IMR-90 (cell line): ENCODE measurements at regions of chr4 and their contacts with region 1.

Region 1: GRCh38 chr4:88378691-88379559 is at the start of gene HERC6:
- DNase-seq: peak; percentile 78
- ATAC-seq: peak; percentile 99
- H3K4me3 ChIP-seq: peak within 1 kb of the TSS; percentile 66
- H3K27ac ChIP-seq: peak within 1 kb of the TSS; percentile 27
- H3K4me1 ChIP-seq: no peaks in the 10 kb centered on the region
- H3K27me3 ChIP-seq: peaks cover 5% of the 10 kb centered on the region
- CTCF ChIP-seq: peak; percentile 54
- POLR2A ChIP-seq: no peak
- RAD21 ChIP-seq: no peak
- total RNA-seq, gene HERC6: 0.83 and 1.6 TPM in 2 replicates

Region 2: GRCh38 chr4:88033309-88033708 is 345.6 kb before region 1 on chr4:
- CTCF ChIA-PET with region 1: no interaction called
- POLR2A ChIA-PET with region 1: no interaction called
- dilution Hi-C with region 1: no loop called
- in situ Hi-C with region 1: no loop called
- intact Hi-C with region 1: loop called (anchors 10 kb)
- DNase-seq: peak; percentile 72
- ATAC-seq: peak; percentile 78
- H3K4me3 ChIP-seq: no peak overlapping the region
- H3K27ac ChIP-seq: no peak overlapping the region
- H3K4me1 ChIP-seq: peaks cover 8% of the 10 kb centered on the region
- H3K27me3 ChIP-seq: no peaks in the 10 kb centered on the region
- CTCF ChIP-seq: peak; percentile 74
- POLR2A ChIP-seq: no peak
- RAD21 ChIP-seq: peak; percentile 80

Region 3: DNA sequence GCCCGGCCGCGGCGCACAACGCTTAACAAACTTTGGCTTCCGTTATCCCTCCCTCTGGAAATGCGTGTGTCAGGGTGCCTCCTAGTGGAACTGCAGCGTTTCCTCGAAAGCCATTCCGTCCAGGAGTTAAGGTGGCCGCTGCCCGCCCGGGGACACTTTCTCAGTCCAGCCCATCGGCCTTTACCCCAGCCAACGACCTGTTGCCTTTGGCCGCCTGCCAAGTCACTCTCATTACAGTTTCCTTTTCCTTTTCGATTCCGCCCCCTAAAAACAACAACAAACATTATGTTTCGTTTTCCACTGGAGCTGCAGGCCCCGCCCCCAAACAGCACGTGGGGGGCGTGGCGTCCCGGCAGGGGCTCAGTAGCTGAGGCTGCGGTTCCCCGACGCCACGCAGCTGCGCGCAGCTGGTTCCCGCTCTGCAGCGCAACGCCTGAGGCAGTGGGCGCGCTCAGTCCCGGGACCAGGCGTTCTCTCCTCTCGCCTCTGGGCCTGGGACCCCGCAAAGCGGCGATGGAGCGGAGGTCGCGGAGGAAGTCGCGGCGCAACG is 77.9 kb after region 1 on chr4 and contains the start of gene HERC5:
- CTCF ChIA-PET with region 1: interaction called, 4 read pairs
- POLR2A ChIA-PET with region 1: no interaction called
- dilution Hi-C with region 1: no loop called
- in situ Hi-C with region 1: no loop called
- intact Hi-C with region 1: loop called (anchors 1 kb)
- DNase-seq: peak; percentile 81
- ATAC-seq: peak; percentile 94
- H3K4me3 ChIP-seq: peak within 1 kb of the TSS; percentile 59
- H3K27ac ChIP-seq: no peak within 1 kb of the TSS
- H3K4me1 ChIP-seq: no peaks in the 10 kb centered on the region
- H3K27me3 ChIP-seq: peaks cover 22% of the 10 kb centered on the region
- CTCF ChIP-seq: peak; percentile 57
- POLR2A ChIP-seq: no peak
- RAD21 ChIP-seq: peak; percentile 60
- total RNA-seq, gene HERC5: under 0.01 TPM in 2 replicates